ENCODE measurements at regions of chr3 and their contacts with region 1.

Region 1: GRCh38 chr3:98817547-98818041 is 54.5 kb downstream of the ST3GAL6 start:
- DNase-seq: peak in 1 of 2 experiments; percentile 64
- H3K4me3 ChIP-seq: no peak overlapping the region
- H3K27ac ChIP-seq: peak overlapping the region; percentile 2; the same call in 1 of the 2 replicates
- H3K4me1 ChIP-seq: peaks cover 24% of the 10 kb centered on the region
- H3K27me3 ChIP-seq: no peaks in the 10 kb centered on the region
- CTCF ChIP-seq: peak; percentile 95

Region 2: DNA sequence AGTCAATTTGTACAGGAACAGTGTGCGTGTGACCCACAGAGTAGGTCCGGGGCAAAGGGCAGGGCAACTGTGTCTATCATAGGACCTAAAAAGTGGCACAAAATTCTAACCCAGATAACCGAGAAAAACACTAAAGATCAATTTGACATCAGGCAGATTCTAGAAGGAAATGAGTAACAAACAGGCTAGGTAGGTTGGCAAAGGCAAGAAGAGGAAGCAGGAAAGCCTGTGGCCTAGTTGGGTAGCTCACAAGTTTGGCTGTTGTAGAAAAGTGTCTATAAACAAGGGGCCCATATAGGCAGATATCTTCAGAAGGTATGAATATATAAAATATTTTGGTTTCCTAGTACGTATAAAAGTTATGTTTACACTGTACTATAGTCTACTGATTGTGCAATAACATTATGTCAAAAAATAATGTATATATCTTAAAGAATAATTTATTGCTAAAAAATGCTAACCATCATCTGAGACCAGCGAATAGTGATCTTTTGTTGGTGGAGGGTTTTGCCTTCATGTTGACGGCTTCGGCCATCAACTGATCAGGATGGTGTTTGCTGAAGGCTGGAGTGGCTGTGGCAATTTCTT is 367.9 kb before region 1 on chr3:
- CTCF ChIA-PET with region 1: interaction called, 14 read pairs
- POLR2A ChIA-PET with region 1: no interaction called
- intact Hi-C with region 1: no loop called
- DNase-seq: no peak
- H3K4me3 ChIP-seq: no peak overlapping the region
- H3K27ac ChIP-seq: no peak overlapping the region
- H3K4me1 ChIP-seq: no peaks in the 10 kb centered on the region
- H3K27me3 ChIP-seq: no peaks in the 10 kb centered on the region
- CTCF ChIP-seq: no peak

Region 3: GRCh38 chr3:98657457-98657856 is 160.1 kb before region 1 on chr3:
- CTCF ChIA-PET with region 1: interaction called, 13 read pairs
- POLR2A ChIA-PET with region 1: no interaction called
- intact Hi-C with region 1: no loop called
- DNase-seq: peak in 1 of 2 experiments; percentile 26
- H3K4me3 ChIP-seq: no peak overlapping the region; the same call in 1 of the 2 replicates
- H3K27ac ChIP-seq: no peak overlapping the region
- H3K4me1 ChIP-seq: no peaks in the 10 kb centered on the region
- H3K27me3 ChIP-seq: no peaks in the 10 kb centered on the region
- CTCF ChIP-seq: no peak; the same call in 1 of the 2 replicates

Region 4: GRCh38 chr3:98994128-98994762 is 176.7 kb after region 1 on chr3:
- CTCF ChIA-PET with region 1: interaction called, 23 read pairs
- POLR2A ChIA-PET with region 1: no interaction called
- intact Hi-C with region 1: loop called (anchors 1 kb)
- DNase-seq: peak in 1 of 2 experiments; percentile 57
- H3K4me3 ChIP-seq: no peak overlapping the region
- H3K27ac ChIP-seq: no peak overlapping the region
- H3K4me1 ChIP-seq: no peaks in the 10 kb centered on the region
- H3K27me3 ChIP-seq: no peaks in the 10 kb centered on the region
- CTCF ChIP-seq: peak; percentile 97

Measured in PC-9 (cell line).